ENCODE measurements at regions of chr3 and their contacts with region 1.

Region 1: DNA sequence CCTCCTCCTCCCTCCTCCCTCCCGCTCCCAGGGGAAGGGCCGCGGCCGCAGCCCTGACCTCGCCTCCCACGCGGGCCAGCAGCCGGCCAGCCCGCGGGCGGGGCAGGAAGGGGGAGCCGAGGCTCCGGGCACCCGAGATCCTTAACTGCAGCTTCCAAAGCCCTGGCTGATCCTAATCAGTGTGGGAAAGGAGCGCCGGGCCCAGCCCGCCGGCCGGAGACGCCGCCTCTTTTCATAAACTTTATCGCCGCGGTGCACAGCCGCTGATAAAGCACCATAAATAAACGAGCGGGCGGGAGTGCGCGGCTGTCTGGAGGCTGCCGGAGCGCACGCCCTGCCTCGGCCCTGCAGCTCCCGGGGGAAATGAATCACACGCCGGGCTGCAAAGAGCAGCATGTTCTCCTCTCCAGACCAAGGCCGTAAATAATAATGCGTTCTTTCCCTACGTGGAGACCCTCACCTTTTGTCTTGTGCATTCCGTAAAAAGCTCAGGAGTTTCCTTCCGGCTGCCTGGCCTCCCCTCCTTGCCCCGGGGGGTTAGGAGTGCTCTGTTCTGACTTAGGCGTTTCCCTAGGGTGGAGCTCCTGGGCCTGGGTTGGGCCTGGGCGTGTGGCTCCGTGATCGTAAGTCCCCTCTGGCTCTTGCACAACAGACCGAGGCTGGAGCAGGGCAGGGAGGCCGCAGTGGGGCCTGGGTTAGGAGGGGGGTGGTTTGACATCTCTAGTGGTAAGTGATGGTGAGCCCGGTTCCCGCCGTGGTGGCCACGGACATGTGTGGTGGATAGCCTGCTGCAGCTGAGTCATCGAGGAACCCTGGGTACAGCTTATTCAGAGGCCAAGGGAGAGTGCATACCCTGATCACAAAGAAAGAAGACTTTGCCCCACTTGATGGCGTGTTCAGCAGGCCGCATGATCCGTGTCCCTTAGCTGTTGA is 132.6 kb upstream of the HES1 start:
- DNase-seq: peak; percentile 93
- H3K4me3 Mint-ChIP-seq: peak overlapping the region; percentile 68
- H3K27ac Mint-ChIP-seq: peak overlapping the region; percentile 88
- H3K4me1 Mint-ChIP-seq: peaks cover 54% of the 10 kb centered on the region
- H3K27me3 Mint-ChIP-seq: no peaks in the 10 kb centered on the region
- CTCF ChIP-seq: no peak

Region 2: GRCh38 chr3:193665370-193665989 is 337.9 kb before region 1 on chr3:
- CTCF ChIA-PET with region 1: no interaction called
- intact Hi-C with region 1: loop called (anchors 10 kb)
- DNase-seq: no peak
- H3K4me3 Mint-ChIP-seq: no peak overlapping the region
- H3K27ac Mint-ChIP-seq: no peak overlapping the region
- H3K4me1 Mint-ChIP-seq: no peaks in the 10 kb centered on the region
- H3K27me3 Mint-ChIP-seq: no peaks in the 10 kb centered on the region
- CTCF ChIP-seq: peak; percentile 74

Region 3: GRCh38 chr3:193826159-193826795 is 177.1 kb before region 1 on chr3:
- CTCF ChIA-PET with region 1: no interaction called
- intact Hi-C with region 1: loop called (anchors 5 kb)
- DNase-seq: peak; percentile 58
- H3K4me3 Mint-ChIP-seq: no peak overlapping the region
- H3K27ac Mint-ChIP-seq: peak overlapping the region; percentile 77
- H3K4me1 Mint-ChIP-seq: peaks cover 64% of the 10 kb centered on the region
- H3K27me3 Mint-ChIP-seq: no peaks in the 10 kb centered on the region
- CTCF ChIP-seq: no peak

Region 4: DNA sequence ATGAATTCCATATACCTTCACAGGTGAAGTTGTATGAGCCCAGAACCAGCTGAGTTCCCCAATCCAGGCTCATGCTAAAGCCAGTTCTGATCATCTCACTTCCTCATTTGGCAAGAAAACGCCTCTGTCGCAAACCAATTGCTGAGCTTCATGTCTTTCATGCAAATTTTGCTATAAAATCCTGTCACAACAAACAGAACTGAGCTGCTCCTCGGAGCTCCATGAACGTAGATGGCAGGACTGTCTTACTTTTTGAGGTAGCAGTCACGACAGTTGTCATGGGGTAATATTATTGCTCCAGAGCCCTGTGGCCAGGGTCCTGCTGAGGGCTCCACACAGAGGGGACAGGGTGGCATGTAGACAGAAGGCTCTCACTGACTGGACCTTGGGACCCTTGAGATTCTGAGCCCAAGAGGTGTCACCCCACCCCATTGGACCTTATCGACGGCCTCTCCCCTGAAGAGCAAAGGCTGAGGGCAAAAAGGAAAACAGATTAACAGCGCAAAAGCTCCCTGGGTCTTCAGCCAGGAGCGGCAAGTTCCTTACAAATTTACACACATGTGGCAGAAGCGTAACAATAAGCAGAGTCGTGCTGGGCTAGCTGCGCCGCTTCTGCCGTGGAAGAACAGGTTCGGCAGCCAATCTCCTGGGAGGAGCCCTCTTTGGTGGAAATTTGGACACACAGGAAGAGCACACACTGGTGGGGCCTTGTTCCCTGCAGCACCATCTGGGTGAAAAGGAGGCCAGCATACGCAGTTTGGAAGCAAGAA is 161.2 kb before region 1 on chr3:
- CTCF ChIA-PET with region 1: interaction called, 6 read pairs
- intact Hi-C with region 1: loop called (anchors 5 kb)
- DNase-seq: no peak
- H3K4me3 Mint-ChIP-seq: peak overlapping the region; percentile 59
- H3K27ac Mint-ChIP-seq: peak overlapping the region; percentile 96
- H3K4me1 Mint-ChIP-seq: peaks cover 94% of the 10 kb centered on the region
- H3K27me3 Mint-ChIP-seq: no peaks in the 10 kb centered on the region
- CTCF ChIP-seq: no peak

Region 5: GRCh38 chr3:193910886-193911738 is 92.3 kb before region 1 on chr3:
- CTCF ChIA-PET with region 1: no interaction called
- intact Hi-C with region 1: no loop called
- DNase-seq: no peak
- H3K4me3 Mint-ChIP-seq: no peak overlapping the region
- H3K27ac Mint-ChIP-seq: no peak overlapping the region
- H3K4me1 Mint-ChIP-seq: peaks cover 13% of the 10 kb centered on the region
- H3K27me3 Mint-ChIP-seq: no peaks in the 10 kb centered on the region
- CTCF ChIP-seq: no peak

Region 6: GRCh38 chr3:193971261-193971751 is 32.1 kb before region 1 on chr3:
- CTCF ChIA-PET with region 1: interaction called, 12 read pairs
- intact Hi-C with region 1: loop called (anchors 2 kb)
- DNase-seq: peak; percentile 66
- H3K4me3 Mint-ChIP-seq: peak overlapping the region; percentile 56
- H3K27ac Mint-ChIP-seq: peak overlapping the region; percentile 29
- H3K4me1 Mint-ChIP-seq: peaks cover 60% of the 10 kb centered on the region
- H3K27me3 Mint-ChIP-seq: no peaks in the 10 kb centered on the region
- CTCF ChIP-seq: no peak

Region 7: GRCh38 chr3:194054961-194055360 is 51.6 kb after region 1 on chr3:
- CTCF ChIA-PET with region 1: interaction called, 3 read pairs
- intact Hi-C with region 1: loop called (anchors 1 kb)
- DNase-seq: no peak
- H3K4me3 Mint-ChIP-seq: no peak overlapping the region
- H3K27ac Mint-ChIP-seq: no peak overlapping the region
- H3K4me1 Mint-ChIP-seq: peaks cover 27% of the 10 kb centered on the region
- H3K27me3 Mint-ChIP-seq: no peaks in the 10 kb centered on the region
- CTCF ChIP-seq: no peak

Region 8: GRCh38 chr3:194141415-194142155 is 138.2 kb after region 1 on chr3:
- CTCF ChIA-PET with region 1: interaction called, 19 read pairs
- intact Hi-C with region 1: loop called (anchors 1 kb)
- DNase-seq: peak; percentile 97
- H3K4me3 Mint-ChIP-seq: peak overlapping the region; percentile 92
- H3K27ac Mint-ChIP-seq: peak overlapping the region; percentile 83
- H3K4me1 Mint-ChIP-seq: peaks cover 35% of the 10 kb centered on the region
- H3K27me3 Mint-ChIP-seq: no peaks in the 10 kb centered on the region
- CTCF ChIP-seq: no peak

Region 9: DNA sequence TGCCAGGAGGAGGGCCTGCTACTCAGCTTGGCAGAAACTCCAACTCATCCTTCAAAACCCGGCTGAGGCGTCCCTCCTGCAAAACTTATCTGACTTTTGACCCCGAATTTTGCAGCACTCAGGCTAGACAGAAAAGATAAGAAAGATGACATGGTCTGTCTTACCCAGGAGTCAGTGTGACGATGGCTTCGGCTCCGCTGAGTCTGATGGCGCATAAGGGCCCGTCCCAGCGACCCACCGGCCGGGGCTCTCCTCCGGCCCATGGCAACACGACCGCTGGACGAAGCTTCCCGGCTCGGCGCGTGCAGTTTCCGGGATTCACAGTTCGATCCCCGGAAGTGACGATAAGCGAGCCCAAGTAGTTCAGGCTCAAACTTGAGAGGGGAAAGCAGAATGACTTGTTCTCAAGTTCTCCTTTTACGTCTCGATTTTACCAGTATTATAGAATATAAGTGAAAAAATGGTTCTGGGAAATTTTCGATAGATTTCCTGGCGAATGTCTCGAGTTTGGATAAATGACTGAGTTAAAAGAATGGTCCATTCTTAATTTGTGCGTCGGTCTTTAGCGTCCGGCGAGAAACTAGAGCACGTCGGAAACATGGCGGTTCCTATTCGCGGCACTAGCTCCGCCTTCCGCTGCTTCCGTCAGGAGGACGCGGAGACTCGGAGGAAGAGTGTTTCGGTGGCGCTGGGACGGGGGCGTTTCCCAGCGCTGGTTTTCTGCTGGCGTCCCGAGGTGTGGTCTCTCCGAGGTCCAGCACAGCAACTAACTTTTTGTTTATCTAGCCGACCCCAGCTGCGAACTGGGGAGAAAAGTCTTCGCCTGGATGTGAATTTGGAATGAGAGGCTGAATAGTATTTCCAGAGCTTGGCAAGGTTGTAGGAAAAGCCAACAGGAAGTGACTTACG is 668.8 kb after region 1 on chr3 and contains the start of gene LSG1:
- CTCF ChIA-PET with region 1: no interaction called
- intact Hi-C with region 1: no loop called
- DNase-seq: peak; percentile 94
- H3K4me3 Mint-ChIP-seq: peak within 1 kb of the TSS; percentile 100
- H3K27ac Mint-ChIP-seq: peak within 1 kb of the TSS; percentile 99
- H3K4me1 Mint-ChIP-seq: peaks cover 53% of the 10 kb centered on the region
- H3K27me3 Mint-ChIP-seq: peaks cover 30% of the 10 kb centered on the region
- CTCF ChIP-seq: no peak
- total RNA-seq, gene LSG1: 86.3 and 90.8 TPM in 2 replicates

Measured in Calu3 (cell line).